Heart right ventricle (tissue), 16 donors: ENCODE measurements at regions of chr2 and their contacts with region 1.

Region 1: GRCh38 chr2:165305391-165306096 is 66.3 kb downstream of the SCN2A start:
- DNase-seq: no peak
- ATAC-seq: no peak
- H3K4me3 ChIP-seq: no peak overlapping the region
- H3K27ac ChIP-seq: no peak overlapping the region
- H3K4me1 ChIP-seq: no peaks in the 10 kb centered on the region
- H3K27me3 ChIP-seq: peaks cover 0 to 8% (median 0%) of the 10 kb centered on the region in 7 donors
- CTCF ChIP-seq: no peak

Region 2: DNA sequence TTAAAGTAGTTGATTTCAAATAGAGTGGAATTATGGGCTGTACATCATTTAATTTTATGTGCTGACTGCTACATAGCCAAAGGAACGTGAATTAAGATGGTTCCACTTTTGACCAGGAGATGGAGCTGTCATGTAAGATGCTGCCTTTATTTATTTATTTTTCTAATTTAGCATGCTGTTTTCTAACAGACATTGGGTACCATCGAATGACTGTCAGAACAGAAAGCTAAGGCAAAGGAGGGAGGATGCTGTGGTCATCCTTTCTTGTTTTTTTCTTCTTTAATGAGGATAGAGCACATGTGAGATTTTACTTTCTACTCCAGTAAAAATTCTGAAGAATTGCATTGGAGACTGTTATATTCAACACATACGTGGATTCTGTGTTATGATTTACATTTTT is 66.3 kb before region 1 on chr2 and contains the start of gene SCN2A:
- intact Hi-C with region 1: loop called in 1 of 10 experiments (anchors 5 kb)
- DNase-seq: no peak
- ATAC-seq: no peak
- H3K4me3 ChIP-seq: no peak within 1 kb of the TSS
- H3K27ac ChIP-seq: no peak within 1 kb of the TSS
- H3K4me1 ChIP-seq: no peaks in the 10 kb centered on the region
- H3K27me3 ChIP-seq: peaks cover 0 to 24% (median 0%) of the 10 kb centered on the region in 7 donors
- CTCF ChIP-seq: peak; percentile 46 to 85 (median 69)
- total RNA-seq, gene SCN2A: 0.04 to 0.26 (median 0.07) TPM in 8 of 10 donors, not detected in the others